Activated naive CD8-positive, alpha-beta T cell treated with anti-CD3 and anti-CD28 coated beads, Interleukin-2, amount 10 ng/mL, durations not matched to agents 7 days and 5 days (primary cell): ENCODE measurements at regions of chr19 and their contacts with region 1.

Region 1: DNA sequence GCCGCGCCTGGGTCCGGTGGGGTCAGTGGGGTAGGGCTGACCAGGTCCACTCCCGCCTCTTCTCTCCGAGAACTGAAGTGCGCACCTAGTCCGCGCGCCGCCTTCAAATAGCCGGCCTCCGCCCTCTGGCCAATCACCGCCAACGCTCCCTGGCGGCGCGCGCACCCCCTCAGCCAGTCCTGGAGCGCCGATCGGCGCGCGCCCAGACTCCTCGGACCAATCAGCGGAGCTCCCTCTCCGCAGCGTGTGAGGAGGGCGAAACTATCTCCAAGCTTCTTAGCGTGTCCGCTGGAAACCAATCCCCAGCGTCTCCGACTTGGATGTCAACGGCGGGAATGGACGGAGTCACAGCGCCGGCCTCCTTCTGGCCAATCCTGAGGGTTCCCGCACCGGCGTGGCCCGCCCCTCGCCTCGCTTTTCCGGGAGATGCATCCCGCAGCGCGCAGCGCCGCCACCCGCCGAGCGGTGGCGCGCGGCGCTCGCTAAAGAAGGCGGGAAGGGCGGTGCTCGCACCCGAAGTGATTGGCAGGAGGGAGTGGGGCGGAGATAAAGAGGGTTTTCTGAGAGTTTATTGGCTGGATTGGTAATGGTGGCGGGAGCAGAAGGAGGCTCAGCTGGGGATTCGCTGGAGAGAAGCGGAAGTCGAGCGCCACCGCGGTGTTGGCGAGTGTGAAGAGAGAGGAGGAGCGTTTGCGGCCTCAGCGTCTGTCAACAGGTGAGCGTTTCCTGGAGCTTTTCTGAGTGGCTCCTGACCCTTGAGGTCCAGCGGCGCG is at the start of gene ASF1B:
- DNase-seq: peak; percentile 97
- ATAC-seq: peak; percentile 88
- H3K4me3 Mint-ChIP-seq: peak within 1 kb of the TSS; percentile 85
- H3K27ac Mint-ChIP-seq: peak within 1 kb of the TSS; percentile 91
- H3K4me1 Mint-ChIP-seq: peaks cover 25% of the 10 kb centered on the region
- H3K27me3 Mint-ChIP-seq: no peaks in the 10 kb centered on the region
- total RNA-seq, gene ASF1B: 75.3 to 82.4 TPM

Region 2: GRCh38 chr19:13880059-13881043 is 256.3 kb before region 1 on chr19:
- POLR2A ChIA-PET with region 1: interaction called, 13 read pairs
- DNase-seq: peak; percentile 100
- ATAC-seq: peak; percentile 93
- H3K4me3 Mint-ChIP-seq: peak overlapping the region; percentile 62
- H3K27ac Mint-ChIP-seq: peak overlapping the region; percentile 73
- H3K4me1 Mint-ChIP-seq: peaks cover 31% of the 10 kb centered on the region
- H3K27me3 Mint-ChIP-seq: peaks cover 4% of the 10 kb centered on the region

Region 3: DNA sequence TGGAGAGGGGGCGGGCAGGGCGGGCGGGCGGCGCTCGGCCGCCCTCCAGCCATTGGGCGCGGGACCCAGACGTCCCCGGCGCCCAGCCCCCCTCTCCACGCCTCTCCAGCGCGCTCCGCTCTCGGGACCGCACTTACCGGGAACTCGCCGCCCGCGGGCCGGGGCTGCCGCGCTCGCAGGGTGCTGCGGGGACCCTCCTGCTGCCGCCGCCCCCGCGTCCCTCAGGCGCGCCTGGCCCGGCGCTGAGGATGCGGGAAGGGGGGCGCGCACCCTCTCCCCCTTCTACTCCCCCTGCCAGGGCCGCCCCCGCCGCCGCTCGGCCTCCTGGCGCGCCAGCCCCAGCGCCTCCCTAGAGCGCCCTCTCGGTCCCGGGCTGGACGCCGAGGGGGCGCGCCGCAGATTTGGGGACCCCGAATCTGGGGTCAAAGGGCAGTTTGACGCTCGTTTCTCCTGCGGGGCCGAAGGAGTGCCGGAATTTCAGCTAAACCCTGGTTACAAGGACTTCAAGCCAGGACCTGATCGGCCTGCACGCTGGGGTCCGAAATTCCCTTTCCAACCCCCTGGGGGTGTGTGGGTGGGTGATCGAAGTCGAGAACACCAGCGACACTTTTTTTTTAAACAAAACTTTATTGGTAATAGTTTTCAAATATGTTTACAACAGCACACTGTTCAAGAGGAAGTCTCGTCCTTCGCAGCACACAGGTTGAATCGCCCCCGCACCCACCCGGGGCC is 45.4 kb before region 1 on chr19:
- POLR2A ChIA-PET with region 1: interaction called, 12 read pairs
- DNase-seq: peak; percentile 86
- ATAC-seq: peak; percentile 75
- H3K4me3 Mint-ChIP-seq: peak overlapping the region; percentile 100
- H3K27ac Mint-ChIP-seq: peak overlapping the region; percentile 99
- H3K4me1 Mint-ChIP-seq: peaks cover 12% of the 10 kb centered on the region
- H3K27me3 Mint-ChIP-seq: no peaks in the 10 kb centered on the region

Region 4: DNA sequence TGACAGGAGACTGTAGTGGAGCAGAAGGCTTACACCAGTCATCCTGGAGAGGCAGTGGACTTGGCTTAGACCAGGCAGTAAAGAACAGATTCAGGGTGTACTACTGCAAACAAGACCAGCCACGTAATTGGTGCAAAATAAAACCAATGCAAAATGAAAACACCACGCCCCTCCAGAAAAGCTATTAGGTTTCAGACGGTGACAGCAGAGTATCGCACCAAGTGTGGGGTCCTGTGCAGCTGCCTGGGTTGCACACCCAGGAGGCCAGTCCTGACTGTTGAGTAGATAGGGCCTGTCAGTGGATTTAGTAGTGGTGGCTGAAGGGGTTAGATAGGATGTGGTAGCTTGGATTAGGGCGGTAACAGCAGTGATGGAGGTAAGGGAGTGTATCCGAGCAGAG is 13.8 kb before region 1 on chr19:
- POLR2A ChIA-PET with region 1: interaction called, 47 read pairs
- DNase-seq: no peak
- ATAC-seq: no peak
- H3K4me3 Mint-ChIP-seq: no peak overlapping the region
- H3K27ac Mint-ChIP-seq: no peak overlapping the region
- H3K4me1 Mint-ChIP-seq: peaks cover 15% of the 10 kb centered on the region
- H3K27me3 Mint-ChIP-seq: no peaks in the 10 kb centered on the region

Region 5: DNA sequence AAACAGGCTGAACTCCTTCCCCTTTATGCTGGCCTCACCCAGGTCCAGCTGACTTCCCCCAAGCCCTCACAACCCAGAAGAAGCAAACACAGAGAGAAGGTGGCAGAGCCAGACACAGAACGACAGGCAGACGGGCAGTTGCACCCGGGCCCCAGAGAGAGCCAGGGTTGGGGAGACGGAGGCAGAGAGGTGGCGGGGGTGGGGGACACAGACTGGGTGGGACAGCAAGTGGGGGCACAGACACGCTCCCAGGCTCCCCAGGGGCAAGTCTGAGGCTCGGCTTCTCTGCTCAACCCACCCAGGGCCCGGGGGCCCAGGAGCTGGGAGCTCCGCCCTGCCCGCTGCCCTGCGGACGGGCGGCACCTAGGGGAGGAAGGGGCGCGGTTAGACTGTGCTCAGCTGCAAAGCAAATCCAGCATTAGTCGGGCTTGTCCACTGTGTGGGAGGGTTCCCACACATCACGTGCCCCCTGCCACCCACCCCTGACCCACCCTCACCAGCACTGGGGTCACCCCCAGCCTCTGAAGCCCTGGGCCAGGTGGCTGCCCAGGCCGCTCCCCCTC is 31.0 kb after region 1 on chr19:
- POLR2A ChIA-PET with region 1: interaction called, 14 read pairs
- DNase-seq: no peak
- ATAC-seq: peak; percentile 61
- H3K4me3 Mint-ChIP-seq: peak overlapping the region; percentile 84
- H3K27ac Mint-ChIP-seq: peak overlapping the region; percentile 92
- H3K4me1 Mint-ChIP-seq: peaks cover 19% of the 10 kb centered on the region
- H3K27me3 Mint-ChIP-seq: no peaks in the 10 kb centered on the region